Activated CD8-positive, alpha-beta T cell treated with anti-CD3 and anti-CD28 coated beads, Interleukin-2, amount 10 ng/mL, durations not matched to agents 7 days and 5 days (primary cell): ENCODE measurements at regions of chr2 and their contacts with region 1.

Region 1: GRCh38 chr2:169109502-169110409 is 40.4 kb downstream of the DHRS9 start:
- DNase-seq: peak; percentile 85
- ATAC-seq: peak; percentile 28
- H3K4me3 Mint-ChIP-seq: no peak overlapping the region
- H3K27ac Mint-ChIP-seq: peak overlapping the region; percentile 43
- H3K4me1 Mint-ChIP-seq: peaks cover 53% of the 10 kb centered on the region
- H3K27me3 Mint-ChIP-seq: no peaks in the 10 kb centered on the region

Region 2: GRCh38 chr2:168545439-168546082 is 564.2 kb before region 1 on chr2:
- CTCF ChIA-PET with region 1: no interaction called
- POLR2A ChIA-PET with region 1: no interaction called
- DNase-seq: no peak
- ATAC-seq: no peak
- H3K4me3 Mint-ChIP-seq: no peak overlapping the region
- H3K27ac Mint-ChIP-seq: no peak overlapping the region
- H3K4me1 Mint-ChIP-seq: peaks cover 12% of the 10 kb centered on the region
- H3K27me3 Mint-ChIP-seq: no peaks in the 10 kb centered on the region

Region 3: GRCh38 chr2:168961450-168962229 is 148.1 kb before region 1 on chr2:
- CTCF ChIA-PET with region 1: interaction called, 101 read pairs
- POLR2A ChIA-PET with region 1: no interaction called
- DNase-seq: peak; percentile 69
- ATAC-seq: peak; percentile 73
- H3K4me3 Mint-ChIP-seq: no peak overlapping the region
- H3K27ac Mint-ChIP-seq: no peak overlapping the region
- H3K4me1 Mint-ChIP-seq: peaks cover 38% of the 10 kb centered on the region
- H3K27me3 Mint-ChIP-seq: no peaks in the 10 kb centered on the region

Region 4: GRCh38 chr2:169066895-169067294 is 42.9 kb before region 1 on chr2:
- CTCF ChIA-PET with region 1: interaction called, 13 read pairs
- POLR2A ChIA-PET with region 1: no interaction called
- DNase-seq: no peak
- ATAC-seq: no peak
- H3K4me3 Mint-ChIP-seq: no peak overlapping the region
- H3K27ac Mint-ChIP-seq: no peak overlapping the region
- H3K4me1 Mint-ChIP-seq: no peaks in the 10 kb centered on the region
- H3K27me3 Mint-ChIP-seq: peaks cover 1% of the 10 kb centered on the region

Region 5: DNA sequence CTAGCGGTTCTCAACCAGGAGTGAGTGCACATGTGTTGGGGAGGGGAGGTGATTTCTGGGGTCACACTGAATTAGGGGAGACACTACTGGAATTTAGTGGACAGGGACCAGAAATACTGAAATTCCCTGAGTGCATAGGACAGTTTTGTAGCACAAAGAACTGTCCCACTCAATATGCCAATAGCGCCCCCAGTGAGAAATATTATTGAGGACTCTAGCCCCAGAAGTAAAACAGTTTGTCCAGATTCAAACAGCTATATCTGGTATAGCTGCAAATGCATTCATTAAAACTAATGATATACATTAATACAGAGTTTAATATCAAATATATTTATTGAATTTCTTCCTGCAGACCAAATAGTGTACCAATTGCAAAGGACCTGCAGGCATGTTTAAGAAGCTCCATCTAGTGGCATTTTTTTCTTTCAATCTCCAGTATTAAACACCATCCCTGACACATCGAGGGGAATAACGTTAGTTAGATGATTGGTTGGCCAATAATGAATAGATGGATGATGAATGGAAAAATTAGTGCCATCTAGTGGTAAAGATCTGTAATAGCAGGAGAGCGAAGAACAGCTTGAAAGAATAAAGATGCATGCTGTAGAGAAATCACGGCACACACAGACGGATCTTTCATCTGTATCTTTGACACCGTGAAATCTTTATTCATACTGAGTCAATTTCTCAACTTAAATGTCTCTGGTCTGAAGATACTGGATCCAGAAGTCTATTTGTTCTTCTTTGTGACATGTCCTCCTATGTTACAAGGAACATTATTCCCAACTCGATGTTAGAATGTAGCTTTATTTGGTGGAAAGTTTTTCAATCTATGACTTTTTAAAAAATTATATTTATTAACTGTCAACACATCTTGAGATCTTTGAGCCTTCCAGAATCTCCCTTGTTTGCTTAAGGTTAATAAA is 22.1 kb after region 1 on chr2:
- CTCF ChIA-PET with region 1: interaction called, 143 read pairs
- POLR2A ChIA-PET with region 1: interaction called, 4 read pairs
- DNase-seq: no peak
- ATAC-seq: peak; percentile 79
- H3K4me3 Mint-ChIP-seq: no peak overlapping the region
- H3K27ac Mint-ChIP-seq: no peak overlapping the region
- H3K4me1 Mint-ChIP-seq: peaks cover 11% of the 10 kb centered on the region
- H3K27me3 Mint-ChIP-seq: peaks cover 2% of the 10 kb centered on the region

Region 6: DNA sequence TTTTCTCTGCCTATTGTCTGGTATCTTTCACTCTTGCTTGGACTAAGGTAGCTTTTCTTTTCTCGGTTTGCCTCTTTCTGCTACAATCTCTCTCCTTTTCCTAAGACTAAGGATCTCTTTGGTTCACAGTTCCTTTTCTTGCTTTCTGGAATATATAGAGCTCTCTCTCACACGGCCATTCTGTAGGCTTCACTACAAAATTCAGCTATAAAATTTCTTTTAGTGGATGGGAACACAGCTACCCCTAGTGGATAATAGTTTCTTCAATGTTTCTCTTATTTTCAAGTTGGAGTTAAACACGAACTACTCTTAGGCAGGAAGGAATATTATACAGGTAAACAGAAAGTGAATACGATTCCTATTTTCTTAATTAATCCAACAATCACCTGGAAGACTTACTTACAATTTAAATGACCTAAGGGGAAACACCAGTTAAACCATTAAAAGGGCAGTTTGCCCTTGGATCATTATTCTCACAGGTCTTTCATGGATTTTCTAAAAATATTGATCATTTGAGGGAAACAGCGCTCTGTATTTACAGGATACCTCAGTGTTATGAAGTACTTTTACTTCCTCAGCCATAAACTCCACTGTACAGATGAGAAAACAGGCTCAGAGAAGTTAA is 112.1 kb after region 1 on chr2:
- CTCF ChIA-PET with region 1: interaction called, 22 read pairs
- POLR2A ChIA-PET with region 1: no interaction called
- DNase-seq: no peak
- ATAC-seq: no peak
- H3K4me3 Mint-ChIP-seq: no peak overlapping the region
- H3K27ac Mint-ChIP-seq: no peak overlapping the region
- H3K4me1 Mint-ChIP-seq: peaks cover 6% of the 10 kb centered on the region
- H3K27me3 Mint-ChIP-seq: peaks cover 2% of the 10 kb centered on the region

Region 7: GRCh38 chr2:169476459-169476858 is 366.7 kb after region 1 on chr2:
- CTCF ChIA-PET with region 1: no interaction called
- POLR2A ChIA-PET with region 1: no interaction called
- DNase-seq: no peak
- ATAC-seq: no peak
- H3K4me3 Mint-ChIP-seq: no peak overlapping the region
- H3K27ac Mint-ChIP-seq: no peak overlapping the region
- H3K4me1 Mint-ChIP-seq: peaks cover 19% of the 10 kb centered on the region
- H3K27me3 Mint-ChIP-seq: no peaks in the 10 kb centered on the region